ENCODE measurements at regions of chr17 and their contacts with region 1.

Region 1: GRCh38 chr17:82863941-82864774 is 24.3 kb upstream of the ZNF750 start:
- DNase-seq: peak; percentile 71 to 96 (median 85)
- ATAC-seq: peak; percentile 90
- H3K4me3 ChIP-seq: peak overlapping the region; percentile 19
- H3K4me3 Mint-ChIP-seq: peak overlapping the region; percentile 32
- H3K27ac ChIP-seq: peak overlapping the region; percentile 75 to 85
- H3K27ac Mint-ChIP-seq: peak overlapping the region; percentile 97
- H3K4me1 ChIP-seq: peaks cover 87% of the 10 kb centered on the region
- H3K4me1 Mint-ChIP-seq: peaks cover 53% of the 10 kb centered on the region
- H3K27me3 ChIP-seq: no peaks in the 10 kb centered on the region
- H3K27me3 Mint-ChIP-seq: no peaks in the 10 kb centered on the region
- CTCF ChIP-seq: no peak

Region 2: DNA sequence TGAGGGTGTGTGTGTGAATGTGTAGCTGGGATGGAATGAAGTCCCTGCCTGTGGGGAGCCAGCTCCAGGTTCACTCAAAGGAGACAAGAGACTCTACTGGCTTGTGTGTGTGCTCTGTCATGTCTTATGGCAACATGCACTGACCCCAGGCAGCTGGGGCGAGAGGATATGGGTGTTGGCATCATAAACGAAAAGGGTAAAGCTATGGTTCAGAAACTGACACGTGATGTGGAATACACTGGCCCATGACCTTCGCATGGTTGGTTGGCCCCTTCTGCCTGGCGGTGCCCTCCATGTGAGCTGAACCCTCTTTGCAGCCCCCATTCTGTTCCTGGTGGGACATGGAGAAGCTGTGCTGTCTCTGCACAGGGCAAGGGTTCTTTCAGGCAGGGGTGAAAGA is 46.2 kb before region 1 on chr17:
- CTCF ChIA-PET with region 1: no interaction called
- POLR2A ChIA-PET with region 1: interaction called, 10 read pairs
- intact Hi-C with region 1: no loop called
- DNase-seq: no peak
- ATAC-seq: no peak
- H3K4me3 ChIP-seq: no peak overlapping the region
- H3K4me3 Mint-ChIP-seq: no peak overlapping the region
- H3K27ac ChIP-seq: no peak overlapping the region
- H3K27ac Mint-ChIP-seq: no peak overlapping the region
- H3K4me1 ChIP-seq: no peaks in the 10 kb centered on the region
- H3K4me1 Mint-ChIP-seq: no peaks in the 10 kb centered on the region
- H3K27me3 ChIP-seq: no peaks in the 10 kb centered on the region
- H3K27me3 Mint-ChIP-seq: no peaks in the 10 kb centered on the region
- CTCF ChIP-seq: no peak

Region 3: GRCh38 chr17:82881900-82882714 is 17.9 kb after region 1 on chr17:
- CTCF ChIA-PET with region 1: interaction called, 27 read pairs
- POLR2A ChIA-PET with region 1: interaction called, 41 read pairs
- intact Hi-C with region 1: loop called (anchors 1 to 2 kb)
- DNase-seq: no peak
- ATAC-seq: no peak
- H3K4me3 ChIP-seq: peak overlapping the region; percentile 35
- H3K4me3 Mint-ChIP-seq: peak overlapping the region; percentile 86
- H3K27ac ChIP-seq: peak overlapping the region; percentile 66 to 78
- H3K27ac Mint-ChIP-seq: peak overlapping the region; percentile 99
- H3K4me1 ChIP-seq: peaks cover 78% of the 10 kb centered on the region
- H3K4me1 Mint-ChIP-seq: peaks cover 77% of the 10 kb centered on the region
- H3K27me3 ChIP-seq: no peaks in the 10 kb centered on the region
- H3K27me3 Mint-ChIP-seq: no peaks in the 10 kb centered on the region
- CTCF ChIP-seq: no peak

Region 4: GRCh38 chr17:83125511-83126274 is 261.5 kb after region 1 on chr17:
- CTCF ChIA-PET with region 1: no interaction called
- POLR2A ChIA-PET with region 1: no interaction called
- intact Hi-C with region 1: no loop called
- DNase-seq: peak in 5 of 14 experiments; percentile 9 to 67 (median 47)
- ATAC-seq: peak; percentile 83
- H3K4me3 ChIP-seq: no peak overlapping the region
- H3K4me3 Mint-ChIP-seq: peak overlapping the region; percentile 46
- H3K27ac ChIP-seq: no peak overlapping the region
- H3K27ac Mint-ChIP-seq: peak overlapping the region; percentile 88
- H3K4me1 ChIP-seq: peaks cover 24% of the 10 kb centered on the region
- H3K4me1 Mint-ChIP-seq: peaks cover 13% of the 10 kb centered on the region
- H3K27me3 ChIP-seq: peaks cover 20 to 21% of the 10 kb centered on the region in 2 experiments
- H3K27me3 Mint-ChIP-seq: peaks cover 45% of the 10 kb centered on the region
- CTCF ChIP-seq: no peak

Measured in CD4-positive, alpha-beta T cell (primary cell).